K562 (cell line): ENCODE measurements at regions of chr9 and their contacts with region 1.

Region 1: DNA sequence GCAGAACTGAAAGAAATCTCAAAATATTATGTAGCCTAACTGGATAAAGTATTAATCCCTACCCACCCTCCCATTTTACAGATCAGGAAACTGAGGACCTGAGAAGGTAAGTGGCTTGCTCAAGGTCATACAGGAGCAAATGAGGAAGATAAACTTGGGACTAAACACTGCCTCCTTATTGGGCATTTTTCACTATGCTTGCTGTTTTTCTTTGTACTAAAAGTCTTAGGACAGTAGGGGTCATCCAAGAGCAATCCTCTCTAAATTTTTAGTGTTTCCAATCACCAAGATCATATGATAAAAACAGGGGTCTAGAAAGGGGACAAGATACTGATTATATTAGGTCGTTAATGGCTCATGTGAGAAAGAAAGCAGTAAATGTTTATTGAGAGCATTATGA is 80.8 kb downstream of the RORB start:
- DNase-seq: peak in 1 of 4 experiments; percentile 4
- ATAC-seq: peak; percentile 26; the same call in 1 of the 3 replicates
- H3K4me3 ChIP-seq: no peak overlapping the region
- H3K27ac ChIP-seq: no peak overlapping the region
- H3K4me1 ChIP-seq: no peaks in the 10 kb centered on the region
- H3K27me3 ChIP-seq: no peaks in the 10 kb centered on the region
- CTCF ChIP-seq: peak in 2 of 3 experiments; percentile 24 to 38; a peak in 2 of 6 replicates
- EP300 ChIP-seq: no peak
- POLR2A ChIP-seq: no peak
- RAD21 ChIP-seq: peak; percentile 19 to 27; a peak in 2 of 4 replicates

Region 2: DNA sequence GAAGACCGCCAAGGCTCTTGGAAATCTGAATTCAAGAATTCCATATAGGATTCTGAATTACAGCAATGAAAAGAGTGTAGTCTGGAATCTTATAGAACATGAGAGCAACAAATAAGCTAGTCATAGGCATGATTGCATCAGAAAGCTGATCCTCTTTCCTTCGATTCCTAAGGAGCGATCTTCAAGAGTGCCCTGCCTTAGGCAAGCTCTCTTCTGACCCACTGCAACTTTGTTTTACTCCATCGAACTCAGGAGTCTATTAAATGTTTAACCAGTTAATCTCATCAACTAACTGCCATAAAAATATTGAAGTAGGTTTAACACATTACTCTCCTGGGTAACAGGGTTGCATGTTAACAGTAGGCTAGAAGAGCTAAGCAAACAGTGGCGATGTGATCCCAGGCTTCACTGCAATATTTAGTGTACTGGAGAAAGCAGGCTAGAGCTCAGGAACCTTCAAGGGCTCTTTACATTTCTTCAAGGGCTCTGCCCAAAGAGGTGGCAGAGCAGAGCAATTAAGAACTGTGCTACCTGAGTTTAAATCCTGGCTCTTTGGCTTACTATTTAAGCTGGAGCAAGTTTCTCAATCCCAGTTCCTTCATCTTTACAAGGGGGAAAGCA is 65.5 kb after region 1 on chr9:
- CTCF ChIA-PET with region 1: no interaction called
- POLR2A ChIA-PET with region 1: no interaction called
- in situ Hi-C with region 1: no loop called
- intact Hi-C with region 1: loop called (anchors 5 kb)
- DNase-seq: no peak
- ATAC-seq: no peak
- H3K4me3 ChIP-seq: no peak overlapping the region
- H3K27ac ChIP-seq: no peak overlapping the region
- H3K4me1 ChIP-seq: no peaks in the 10 kb centered on the region
- H3K27me3 ChIP-seq: peaks cover 2 to 5% of the 10 kb centered on the region in 2 experiments; a peak in 3 of 5 replicates
- CTCF ChIP-seq: no peak
- EP300 ChIP-seq: no peak
- POLR2A ChIP-seq: no peak
- RAD21 ChIP-seq: no peak

Region 3: DNA sequence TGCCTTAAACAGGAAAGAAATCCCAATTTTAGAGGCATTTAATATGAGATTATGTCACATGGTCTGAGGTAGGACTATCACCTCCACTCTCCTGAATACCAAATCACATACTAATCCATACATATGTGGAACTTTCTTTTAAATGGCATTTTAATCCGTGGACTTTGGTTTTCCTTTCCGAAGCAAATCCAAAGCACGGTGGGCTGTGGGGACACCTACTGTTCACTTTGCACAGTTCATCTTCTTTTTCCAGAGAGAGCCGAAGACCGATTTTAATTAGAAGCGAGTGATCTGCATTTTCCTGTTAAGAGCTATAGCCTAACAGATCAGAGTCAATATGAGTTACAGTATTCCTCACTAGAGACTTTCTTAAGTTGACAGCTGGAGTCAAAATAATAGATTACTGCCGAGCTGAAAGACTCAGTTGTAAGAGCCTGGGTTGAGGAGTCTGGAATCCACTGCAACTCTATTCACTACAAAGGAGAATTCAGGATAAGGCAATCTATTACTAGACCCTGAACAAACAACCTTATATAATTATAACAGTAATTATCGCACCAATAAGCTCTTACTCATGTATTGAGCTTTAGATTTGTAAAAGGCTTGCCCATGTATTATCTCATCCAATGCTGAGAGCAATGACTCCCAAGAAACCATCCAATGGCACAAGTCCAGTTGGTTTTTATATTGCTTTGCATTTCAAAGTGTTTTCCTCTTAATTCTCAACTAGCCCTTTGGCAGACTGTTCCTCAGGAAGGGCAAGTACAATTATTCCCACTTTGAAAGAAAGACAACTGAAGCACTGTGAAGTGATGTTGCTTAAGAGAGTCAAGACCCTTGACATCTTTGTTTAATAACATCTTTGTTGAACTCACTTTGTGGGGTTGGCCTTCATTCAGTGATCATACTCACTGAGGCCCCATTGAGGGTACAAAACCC is 165.1 kb after region 1 on chr9:
- CTCF ChIA-PET with region 1: no interaction called
- POLR2A ChIA-PET with region 1: no interaction called
- in situ Hi-C with region 1: no loop called
- intact Hi-C with region 1: loop called (anchors 2 kb)
- DNase-seq: peak; percentile 8 to 23 (median 10)
- ATAC-seq: 0 out of 3 replicates have a peak, but pooled peaks have one; percentile 39
- H3K4me3 ChIP-seq: no peak overlapping the region
- H3K27ac ChIP-seq: no peak overlapping the region
- H3K4me1 ChIP-seq: no peaks in the 10 kb centered on the region
- H3K27me3 ChIP-seq: no peaks in the 10 kb centered on the region
- CTCF ChIP-seq: peak; percentile 34 to 56 (median 54); a peak in 4 of 6 replicates
- EP300 ChIP-seq: no peak
- POLR2A ChIP-seq: no peak
- RAD21 ChIP-seq: peak; percentile 53 to 56